Left ventricle myocardium superior (tissue), 1 donor: ENCODE measurements at regions of chr14 and their contacts with region 1.

Region 1: GRCh38 chr14:76910371-76910890 is 84.2 kb downstream of the LRRC74A start:
- DNase-seq: no peak
- ATAC-seq: no peak

Region 2: GRCh38 chr14:77053046-77053841 is 142.8 kb after region 1 on chr14:
- intact Hi-C with region 1: loop called (anchors 5 kb)
- DNase-seq: peak; percentile 89
- ATAC-seq: peak; percentile 74

Region 3: GRCh38 chr14:77067632-77068514 is 157.4 kb after region 1 on chr14:
- intact Hi-C with region 1: loop called (anchors 5 kb)
- DNase-seq: peak; percentile 83
- ATAC-seq: peak; percentile 82